ENCODE measurements at regions of chr9 and their contacts with region 1.

Region 1: GRCh38 chr9:126398403-126399058 is 71.9 kb downstream of the MVB12B start:
- DNase-seq: peak; percentile 64 to 81
- H3K4me3 ChIP-seq: no peak overlapping the region
- H3K27ac ChIP-seq: no peak overlapping the region
- H3K4me1 ChIP-seq: no peaks in the 10 kb centered on the region
- H3K27me3 ChIP-seq: no peaks in the 10 kb centered on the region
- CTCF ChIP-seq: peak; percentile 93 to 97 (median 95)
- POLR2A ChIP-seq: no peak

Region 2: GRCh38 chr9:125949243-125949642 is 449.3 kb before region 1 on chr9:
- intact Hi-C with region 1: no loop called
- DNase-seq: no peak
- H3K4me3 ChIP-seq: no peak overlapping the region
- H3K27ac ChIP-seq: no peak overlapping the region
- H3K4me1 ChIP-seq: no peaks in the 10 kb centered on the region
- H3K27me3 ChIP-seq: no peaks in the 10 kb centered on the region
- CTCF ChIP-seq: no peak
- POLR2A ChIP-seq: no peak

Region 3: DNA sequence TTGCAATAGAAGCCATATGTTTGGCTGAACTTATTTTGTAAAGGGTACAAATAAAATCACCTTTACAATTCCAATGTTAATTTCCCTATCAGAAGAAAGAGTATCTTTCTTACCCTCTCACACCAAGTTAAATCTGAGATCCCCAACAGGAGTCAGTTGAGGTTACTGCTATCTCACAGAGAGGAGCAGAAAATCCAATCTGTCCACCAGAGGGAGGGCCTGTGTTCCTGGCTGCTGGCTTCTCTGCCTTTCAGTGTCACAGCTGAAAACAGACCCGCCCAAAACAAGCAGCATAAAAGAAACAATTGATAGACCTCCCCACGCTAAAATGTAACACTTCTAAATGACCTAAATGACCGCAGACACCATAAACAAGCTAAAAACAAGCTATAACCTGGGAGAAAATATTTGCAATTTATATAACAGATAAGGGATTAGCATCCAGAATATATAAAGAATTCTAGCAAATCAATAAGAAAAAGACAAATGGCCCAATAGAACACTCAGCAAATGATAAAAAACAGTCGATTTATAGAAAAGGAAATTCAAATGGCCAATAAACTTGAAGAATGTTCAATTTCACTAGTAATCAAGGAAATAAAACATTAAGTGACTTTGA is 96.4 kb before region 1 on chr9:
- intact Hi-C with region 1: loop called (anchors 10 kb)
- DNase-seq: peak; percentile 33 to 43
- H3K4me3 ChIP-seq: no peak overlapping the region
- H3K27ac ChIP-seq: no peak overlapping the region
- H3K4me1 ChIP-seq: no peaks in the 10 kb centered on the region
- H3K27me3 ChIP-seq: no peaks in the 10 kb centered on the region
- CTCF ChIP-seq: peak; percentile 54 to 67 (median 62)
- POLR2A ChIP-seq: no peak

Region 4: GRCh38 chr9:126326228-126327005 is 72.1 kb before region 1 on chr9 and contains the start of gene MVB12B:
- intact Hi-C with region 1: no loop called
- DNase-seq: peak; percentile 21 to 34
- H3K4me3 ChIP-seq: peak within 1 kb of the TSS; percentile 33 to 62
- H3K27ac ChIP-seq: peak within 1 kb of the TSS; percentile 74 to 81
- H3K4me1 ChIP-seq: peaks cover 0 to 2% of the 10 kb centered on the region in 2 donors
- H3K27me3 ChIP-seq: no peaks in the 10 kb centered on the region
- CTCF ChIP-seq: peak in 1 of 4 experiments; percentile 10
- POLR2A ChIP-seq: no peak
- total RNA-seq, gene MVB12B: 2.1 to 39.2 (median 22.2) TPM

Region 5: GRCh38 chr9:126337729-126338372 is 60.7 kb before region 1 on chr9:
- intact Hi-C with region 1: no loop called
- DNase-seq: no peak
- H3K4me3 ChIP-seq: no peak overlapping the region
- H3K27ac ChIP-seq: no peak overlapping the region
- H3K4me1 ChIP-seq: no peaks in the 10 kb centered on the region
- H3K27me3 ChIP-seq: no peaks in the 10 kb centered on the region
- CTCF ChIP-seq: no peak
- POLR2A ChIP-seq: no peak

Region 6: GRCh38 chr9:126599047-126599650 is 200.6 kb after region 1 on chr9:
- intact Hi-C with region 1: no loop called
- DNase-seq: no peak
- H3K4me3 ChIP-seq: no peak overlapping the region
- H3K27ac ChIP-seq: no peak overlapping the region
- H3K4me1 ChIP-seq: no peaks in the 10 kb centered on the region
- H3K27me3 ChIP-seq: no peaks in the 10 kb centered on the region
- CTCF ChIP-seq: no peak
- POLR2A ChIP-seq: no peak